BJ (cell line): ENCODE measurements at regions of chr7 and their contacts with region 1.

Region 1: DNA sequence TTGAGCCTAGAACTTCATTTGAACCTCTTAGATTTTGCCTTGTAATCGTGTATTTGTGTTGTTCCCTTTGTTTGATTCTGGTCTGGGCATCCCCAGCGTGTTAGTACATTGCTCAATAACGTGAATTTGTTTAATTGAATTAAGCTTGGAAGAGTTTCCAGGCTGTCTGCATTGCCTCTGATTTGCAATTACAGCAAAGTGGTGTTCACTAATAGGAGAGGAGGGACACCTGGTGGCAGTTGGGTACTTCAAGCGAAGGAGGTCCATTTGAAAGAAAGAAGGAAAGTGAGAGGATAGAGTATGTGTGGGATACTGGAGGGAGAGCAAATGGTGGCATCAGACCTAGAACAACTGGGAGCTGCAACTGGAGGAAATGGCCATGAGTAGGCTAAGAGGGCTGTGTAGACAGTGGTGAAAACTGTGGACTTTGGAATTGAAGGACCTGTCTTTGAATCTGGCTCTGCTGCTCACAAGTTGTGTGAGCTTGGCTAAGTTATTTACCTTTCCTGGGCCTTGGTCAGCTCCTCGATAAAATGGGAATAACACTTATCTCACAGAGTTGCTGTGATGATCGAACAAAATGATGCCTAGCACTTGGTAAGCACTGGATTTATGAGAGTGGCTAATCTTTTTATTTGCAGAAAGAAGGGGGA is 15.1 kb downstream of the LSMEM1 start:
- DNase-seq: no peak
- H3K4me3 ChIP-seq: no peak overlapping the region
- H3K27me3 ChIP-seq: peaks cover 6% of the 10 kb centered on the region
- CTCF ChIP-seq: peak; percentile 66

Region 2: DNA sequence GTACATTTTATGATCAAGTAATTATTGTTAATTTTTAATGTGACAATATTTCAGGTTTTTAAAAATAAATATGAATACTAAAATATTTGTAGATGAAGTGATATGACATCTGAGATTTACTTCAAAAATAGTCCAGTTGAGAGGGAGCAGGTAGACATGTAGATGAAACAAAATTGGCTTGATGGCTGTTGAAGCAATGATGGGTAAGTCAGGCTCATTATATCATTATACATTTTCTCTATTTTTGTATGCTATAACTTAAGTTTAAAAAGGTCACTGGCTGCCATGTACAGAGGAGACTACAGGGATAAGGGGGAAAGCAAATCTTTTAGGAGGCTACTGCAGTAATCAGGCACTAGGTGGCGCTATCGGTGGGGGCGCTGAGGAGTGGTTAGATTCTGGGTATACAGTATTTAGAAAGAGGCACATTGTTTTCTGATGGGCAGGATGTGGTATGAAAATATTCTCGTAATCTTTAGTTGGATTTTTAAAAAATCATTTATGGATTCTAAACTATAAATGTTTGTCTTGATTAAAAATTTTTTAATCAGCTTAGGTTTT is 743.8 kb before region 1 on chr7:
- CTCF ChIA-PET with region 1: interaction called, 18 read pairs
- POLR2A ChIA-PET with region 1: no interaction called
- DNase-seq: no peak
- H3K4me3 ChIP-seq: no peak overlapping the region
- H3K27me3 ChIP-seq: no peaks in the 10 kb centered on the region; the same call in 1 of the 2 replicates
- CTCF ChIP-seq: peak; percentile 86

Region 3: DNA sequence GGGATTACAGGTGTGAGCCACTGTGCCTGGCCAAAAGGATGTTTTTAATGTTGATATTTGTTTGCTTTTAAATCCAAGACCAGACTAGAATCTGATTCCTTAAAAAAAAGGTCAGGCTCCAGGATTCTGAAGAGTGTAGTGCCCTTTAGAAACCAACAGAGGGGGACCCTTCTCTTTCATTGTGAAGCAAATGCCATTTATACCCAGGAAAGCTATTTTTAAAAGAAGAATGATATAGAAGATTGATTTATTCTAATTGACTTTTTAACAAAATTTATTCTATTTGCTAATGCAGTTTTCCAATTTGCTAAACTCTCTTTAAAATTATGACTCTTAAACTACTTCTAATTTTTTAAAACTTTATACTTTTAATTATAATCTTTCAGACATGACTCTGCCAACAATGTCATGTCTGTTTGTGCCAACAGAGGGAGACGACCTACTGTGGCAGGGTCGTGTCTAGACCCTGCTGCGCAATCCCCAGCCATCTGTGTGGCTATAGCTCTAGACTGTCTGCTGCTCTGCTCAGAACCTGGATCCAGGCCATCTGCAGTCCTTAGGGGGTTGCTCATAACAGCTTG is 732.6 kb before region 1 on chr7:
- CTCF ChIA-PET with region 1: interaction called, 11 read pairs
- POLR2A ChIA-PET with region 1: no interaction called
- DNase-seq: no peak
- H3K4me3 ChIP-seq: no peak overlapping the region
- H3K27me3 ChIP-seq: no peaks in the 10 kb centered on the region
- CTCF ChIP-seq: peak; percentile 73

Region 4: DNA sequence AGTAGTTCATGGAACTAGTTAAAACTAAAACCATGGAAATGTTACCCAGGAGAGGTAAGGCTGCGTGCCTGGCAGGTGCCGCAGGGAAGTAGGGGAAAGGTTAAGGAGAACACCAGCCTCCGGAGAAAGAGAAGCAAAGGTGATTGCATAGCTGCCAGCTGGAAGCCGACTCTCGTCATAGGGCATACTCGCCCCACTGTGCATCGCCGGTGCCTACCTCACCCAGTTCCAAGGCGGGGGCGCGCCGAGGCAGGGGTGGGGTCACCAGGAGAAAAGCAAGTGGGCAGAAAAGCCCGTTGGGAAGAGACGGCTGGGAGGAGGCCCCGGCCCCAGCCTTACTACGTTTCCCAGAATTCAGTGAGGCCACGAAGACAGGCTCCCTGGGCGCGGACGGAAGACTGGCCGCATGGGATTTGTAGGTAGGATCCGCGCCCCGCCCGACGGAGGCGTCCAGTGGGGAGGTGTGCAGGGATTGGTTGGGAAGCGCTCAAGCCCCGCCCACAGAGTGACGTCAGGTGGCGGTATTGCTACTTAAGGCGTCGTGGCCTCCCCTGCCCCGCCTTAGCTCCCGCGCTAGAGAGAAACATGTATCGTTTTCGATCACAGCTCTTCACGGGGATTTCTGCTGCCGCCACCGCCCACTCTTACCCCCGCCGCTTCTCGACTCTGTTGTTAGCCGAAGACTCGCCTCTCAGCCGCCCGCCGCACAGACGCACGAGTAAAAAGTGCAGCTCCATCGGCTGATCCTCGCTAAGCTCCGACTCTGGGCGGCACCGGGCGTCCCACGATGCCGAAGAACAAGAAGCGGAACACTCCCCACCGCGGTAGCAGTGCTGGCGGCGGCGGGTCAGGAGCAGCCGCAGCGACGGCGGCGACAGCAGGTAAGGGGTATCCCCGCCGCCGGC is 45.8 kb before region 1 on chr7 and contains the start of gene IFRD1:
- CTCF ChIA-PET with region 1: interaction called, 16 read pairs
- POLR2A ChIA-PET with region 1: no interaction called
- DNase-seq: peak; percentile 86
- H3K4me3 ChIP-seq: peak within 1 kb of the TSS; percentile 100
- H3K27me3 ChIP-seq: no peaks in the 10 kb centered on the region
- CTCF ChIP-seq: no peak
- polyA plus RNA-seq, gene IFRD1: 24.2 and 39.6 TPM in 2 replicates

Region 5: DNA sequence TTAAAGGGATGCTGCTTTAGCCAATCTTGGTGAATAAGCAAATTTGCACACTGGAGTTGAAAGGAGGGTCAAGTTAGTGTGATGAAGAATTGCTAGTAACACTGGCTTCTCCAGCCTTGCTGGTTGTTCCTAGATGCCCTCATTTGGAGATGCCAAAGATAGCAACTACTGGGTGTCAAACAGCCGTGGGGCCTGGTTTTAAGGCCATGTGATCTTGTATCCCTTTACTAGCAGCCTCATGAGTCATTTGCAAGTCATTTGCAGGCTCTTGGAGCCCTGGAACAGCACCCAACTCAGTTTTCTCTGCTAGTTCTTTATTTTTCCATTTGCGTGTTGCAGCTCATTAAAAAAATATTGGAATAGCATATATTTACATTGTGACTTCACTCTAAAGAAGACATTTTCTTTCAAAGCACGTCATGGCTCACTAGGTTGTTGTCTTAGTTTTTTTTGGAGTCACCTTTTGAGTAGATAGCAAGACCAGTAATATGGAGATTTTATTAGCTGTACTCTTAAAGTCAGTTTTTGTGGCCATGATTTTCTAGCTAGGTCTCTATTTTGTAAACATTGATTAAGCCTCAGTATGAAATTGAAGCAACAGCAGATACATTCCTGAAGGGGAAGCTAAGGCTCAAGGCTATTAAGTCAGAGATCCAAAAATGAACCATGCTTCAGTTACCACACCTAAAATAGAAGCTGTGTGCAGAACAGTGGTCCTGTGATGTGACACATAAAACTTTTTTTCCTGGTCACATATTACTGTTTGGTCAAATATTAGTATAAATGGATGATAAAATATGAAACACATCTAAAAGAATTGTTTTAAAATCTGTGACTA is 13.9 kb before region 1 on chr7:
- CTCF ChIA-PET with region 1: interaction called, 28 read pairs
- POLR2A ChIA-PET with region 1: no interaction called
- DNase-seq: peak; percentile 75
- H3K4me3 ChIP-seq: no peak overlapping the region
- H3K27me3 ChIP-seq: no peaks in the 10 kb centered on the region
- CTCF ChIP-seq: no peak

Region 6: GRCh38 chr7:112523871-112524270 is 27.9 kb after region 1 on chr7:
- CTCF ChIA-PET with region 1: no interaction called
- POLR2A ChIA-PET with region 1: no interaction called
- DNase-seq: no peak
- H3K4me3 ChIP-seq: no peak overlapping the region
- H3K27me3 ChIP-seq: no peaks in the 10 kb centered on the region; the same call in 1 of the 2 replicates
- CTCF ChIP-seq: no peak

Region 7: DNA sequence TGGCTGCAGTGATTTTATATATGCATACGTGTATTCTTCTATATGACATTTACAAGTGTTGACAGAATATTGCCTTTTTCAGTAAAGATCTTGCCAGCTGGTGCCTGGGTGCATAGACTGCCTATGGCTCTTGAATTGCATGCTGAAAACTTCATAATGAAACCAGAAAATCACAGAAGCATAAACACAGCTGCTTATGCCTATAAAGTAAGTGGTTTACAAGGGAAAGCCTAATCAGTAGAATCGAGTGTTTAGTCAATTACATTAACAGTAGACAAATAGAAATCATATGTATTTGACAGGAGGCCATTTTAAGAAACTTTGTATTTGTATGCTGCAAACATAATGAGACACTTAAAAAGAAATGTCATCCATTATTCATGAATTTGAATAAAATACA is 211.7 kb after region 1 on chr7:
- CTCF ChIA-PET with region 1: no interaction called
- POLR2A ChIA-PET with region 1: no interaction called
- DNase-seq: no peak
- H3K4me3 ChIP-seq: no peak overlapping the region
- H3K27me3 ChIP-seq: no peaks in the 10 kb centered on the region
- CTCF ChIP-seq: no peak